ENCODE measurements at regions of chr13 and their contacts with region 1.

Region 1: GRCh38 chr13:48975856-48976575 is at the start of gene FNDC3A:
- DNase-seq: peak; percentile 86
- H3K4me3 Mint-ChIP-seq: peak within 1 kb of the TSS; percentile 94
- H3K27ac Mint-ChIP-seq: peak within 1 kb of the TSS; percentile 100
- H3K4me1 Mint-ChIP-seq: peaks cover 43% of the 10 kb centered on the region
- H3K27me3 Mint-ChIP-seq: peaks cover 2% of the 10 kb centered on the region
- total RNA-seq, gene FNDC3A: 26.9 and 27.0 TPM in 2 replicates

Region 2: GRCh38 chr13:48037346-48038173 is 938.5 kb before region 1 on chr13 and contains the start of gene NUDT15:
- intact Hi-C with region 1: loop called (anchors 1 kb)
- DNase-seq: peak; percentile 94
- H3K4me3 Mint-ChIP-seq: peak within 1 kb of the TSS; percentile 98
- H3K27ac Mint-ChIP-seq: peak within 1 kb of the TSS; percentile 99
- H3K4me1 Mint-ChIP-seq: peaks cover 46% of the 10 kb centered on the region
- H3K27me3 Mint-ChIP-seq: no peaks in the 10 kb centered on the region
- total RNA-seq, gene NUDT15: 15.3 and 16.8 TPM in 2 replicates

Region 3: DNA sequence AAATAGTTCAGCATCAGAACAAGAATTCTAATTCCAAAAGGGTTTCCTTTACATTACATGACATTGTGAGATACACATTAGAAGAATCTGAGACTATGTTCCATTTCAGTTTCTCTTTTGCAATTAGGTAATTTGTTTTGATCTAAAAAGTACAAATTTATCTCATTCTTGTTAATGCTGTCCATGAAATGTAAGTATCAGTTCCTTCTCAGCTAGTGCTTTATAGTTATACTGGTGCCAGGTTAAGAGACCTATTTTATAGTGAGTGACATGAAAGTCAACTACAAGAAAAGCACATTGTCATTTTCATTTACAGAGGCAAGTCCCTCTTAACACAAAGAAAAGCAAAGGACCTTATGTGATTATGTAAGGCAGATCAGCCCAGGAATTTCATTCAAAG is 487.0 kb before region 1 on chr13:
- intact Hi-C with region 1: no loop called
- DNase-seq: no peak
- H3K4me3 Mint-ChIP-seq: peak overlapping the region; percentile 5
- H3K27ac Mint-ChIP-seq: no peak overlapping the region
- H3K4me1 Mint-ChIP-seq: peaks cover 24% of the 10 kb centered on the region
- H3K27me3 Mint-ChIP-seq: no peaks in the 10 kb centered on the region

Region 4: DNA sequence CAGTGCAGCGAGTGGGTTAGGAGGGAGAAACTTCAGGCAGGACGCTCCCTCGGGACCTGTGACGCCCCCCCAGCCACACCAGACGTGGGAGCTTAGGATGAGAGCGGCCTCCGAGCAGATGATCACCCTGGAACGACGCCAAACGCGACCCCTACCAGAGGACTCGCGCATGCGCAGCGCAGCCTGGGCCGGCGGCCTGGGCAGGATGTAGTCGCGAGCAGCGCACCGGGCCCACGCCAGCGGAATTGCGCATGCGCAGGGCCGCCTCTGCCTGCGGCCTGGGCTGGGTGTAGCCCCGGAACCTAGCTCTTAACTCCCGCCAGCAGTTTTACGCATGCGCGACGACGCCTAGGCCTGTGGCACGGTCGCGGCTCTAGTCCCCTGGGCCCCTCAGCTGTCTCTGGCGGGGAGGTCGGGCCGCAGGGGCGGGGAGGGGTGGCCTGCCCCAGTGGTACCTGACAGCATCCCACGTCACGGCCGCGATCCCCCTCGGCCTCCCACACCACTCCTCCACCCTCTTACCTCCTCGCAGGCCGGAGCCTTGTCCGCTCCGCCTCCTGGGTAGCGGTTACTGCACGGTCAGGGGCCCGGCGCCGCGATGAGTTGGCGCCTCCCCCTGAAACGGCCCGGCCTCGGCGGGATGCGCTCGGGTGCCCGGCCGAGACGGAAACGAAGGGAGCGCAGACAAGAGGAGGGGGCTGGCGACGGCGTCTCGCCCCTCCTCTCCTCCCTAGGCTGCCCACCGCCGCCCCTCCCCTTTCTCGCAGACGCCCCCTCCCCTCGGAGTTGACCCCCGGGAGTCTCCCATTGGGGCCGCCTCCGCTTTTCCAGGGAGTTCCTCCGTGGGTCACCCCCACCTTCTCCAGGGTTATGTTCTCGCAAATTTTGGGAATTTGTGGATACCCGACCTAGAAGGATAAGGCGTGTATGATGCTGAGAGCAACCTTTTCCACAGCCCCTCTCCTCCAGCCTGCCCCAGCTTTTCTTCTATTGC is 443.2 kb before region 1 on chr13 and contains the start of gene RCBTB2:
- intact Hi-C with region 1: loop called (anchors 10 kb)
- DNase-seq: peak; percentile 99
- H3K4me3 Mint-ChIP-seq: peak within 1 kb of the TSS; percentile 91
- H3K27ac Mint-ChIP-seq: peak within 1 kb of the TSS; percentile 98
- H3K4me1 Mint-ChIP-seq: peaks cover 32% of the 10 kb centered on the region
- H3K27me3 Mint-ChIP-seq: peaks cover 7% of the 10 kb centered on the region
- total RNA-seq, gene RCBTB2: 1.7 and 2.0 TPM in 2 replicates

Region 5: GRCh38 chr13:48804821-48805601 is 171.0 kb before region 1 on chr13:
- intact Hi-C with region 1: loop called (anchors 2 kb)
- DNase-seq: no peak
- H3K4me3 Mint-ChIP-seq: peak overlapping the region; percentile 32
- H3K27ac Mint-ChIP-seq: peak overlapping the region; percentile 46
- H3K4me1 Mint-ChIP-seq: peaks cover 31% of the 10 kb centered on the region
- H3K27me3 Mint-ChIP-seq: peaks cover 10% of the 10 kb centered on the region

Region 6: DNA sequence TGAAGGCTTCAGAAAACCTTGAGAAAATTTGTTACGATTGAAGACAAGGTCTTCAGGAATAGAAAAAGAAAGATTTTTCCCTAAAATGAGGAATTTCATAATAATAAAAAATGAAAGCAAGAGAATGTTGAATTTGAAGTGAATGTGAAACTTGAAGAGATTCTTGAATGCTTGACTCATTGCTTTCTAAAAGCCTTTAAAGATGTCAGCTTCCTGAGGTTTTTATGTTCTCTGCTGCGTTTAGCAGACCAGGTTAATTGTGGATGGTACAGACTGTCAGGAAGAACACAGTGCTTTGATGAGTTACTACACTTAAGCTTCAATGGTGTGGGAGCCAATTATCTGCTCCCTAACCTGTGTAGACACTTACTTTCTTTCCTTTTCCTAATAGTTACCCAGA is 96.6 kb before region 1 on chr13:
- intact Hi-C with region 1: loop called (anchors 1 kb)
- DNase-seq: no peak
- H3K4me3 Mint-ChIP-seq: peak overlapping the region; percentile 1
- H3K27ac Mint-ChIP-seq: peak overlapping the region; percentile 1
- H3K4me1 Mint-ChIP-seq: peaks cover 52% of the 10 kb centered on the region
- H3K27me3 Mint-ChIP-seq: peaks cover 6% of the 10 kb centered on the region

Region 7: GRCh38 chr13:49110122-49110912 is 134.3 kb after region 1 on chr13:
- intact Hi-C with region 1: loop called (anchors 1 kb)
- DNase-seq: peak; percentile 71
- H3K4me3 Mint-ChIP-seq: peak overlapping the region; percentile 87
- H3K27ac Mint-ChIP-seq: peak overlapping the region; percentile 70
- H3K4me1 Mint-ChIP-seq: peaks cover 31% of the 10 kb centered on the region
- H3K27me3 Mint-ChIP-seq: no peaks in the 10 kb centered on the region